Heart right ventricle (tissue), 16 donors: ENCODE measurements at regions of chr16 and their contacts with region 1.

Region 1: GRCh38 chr16:1474796-1475551 is at the start of gene CLCN7:
- DNase-seq: peak; percentile 90 to 93
- ATAC-seq: peak; percentile 94 to 98 (median 98)
- H3K4me3 ChIP-seq: peak within 1 kb of the TSS; percentile 61 to 99 (median 90)
- H3K27ac ChIP-seq: peak within 1 kb of the TSS; percentile 42 to 99 (median 94)
- H3K4me1 ChIP-seq: peaks cover 5 to 51% (median 24%) of the 10 kb centered on the region in 9 donors
- H3K27me3 ChIP-seq: no peaks in the 10 kb centered on the region
- CTCF ChIP-seq: no peak
- total RNA-seq, gene CLCN7: 29.9 to 60.1 (median 35.1) TPM

Region 2: DNA sequence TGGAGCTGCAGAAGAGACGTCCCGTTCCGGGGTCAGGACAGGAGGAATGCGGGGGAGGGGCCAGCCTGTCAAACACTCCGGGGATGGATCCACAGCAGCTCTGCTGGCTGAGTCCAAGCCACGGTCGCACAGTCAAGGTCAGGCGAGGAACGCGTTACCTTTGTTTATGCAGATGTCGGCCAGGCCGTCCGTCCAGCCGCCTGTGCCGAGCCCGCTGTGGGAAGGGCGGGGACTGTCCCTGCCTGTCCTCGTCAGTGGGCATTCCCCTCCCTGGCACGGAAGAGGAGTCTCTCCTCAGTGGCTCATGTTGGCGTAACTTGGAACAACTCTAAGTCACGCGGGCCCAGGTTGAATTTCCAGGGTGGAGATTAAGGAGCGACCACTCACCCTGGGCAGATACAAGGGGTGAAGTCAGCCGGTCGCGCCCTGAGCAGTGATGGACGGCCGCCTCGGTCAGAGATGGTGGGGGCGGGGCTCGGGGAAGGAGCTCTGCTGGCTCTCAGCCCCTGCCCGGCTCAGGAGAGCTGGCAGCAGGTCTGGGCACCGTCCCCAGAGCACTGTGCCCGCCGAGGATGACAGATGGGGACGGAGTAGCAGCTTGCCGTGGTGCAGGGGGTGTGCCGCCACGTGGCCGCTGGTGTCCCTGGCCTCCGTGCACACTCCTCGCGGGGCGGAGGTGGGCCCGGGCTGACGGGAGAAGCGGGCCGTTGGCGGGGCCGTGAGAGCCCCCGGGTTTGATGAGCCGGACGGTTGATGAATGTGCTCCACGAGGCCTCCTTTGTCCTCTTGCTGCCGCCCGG is 314.8 kb before region 1 on chr16:
- intact Hi-C with region 1: no loop called
- DNase-seq: peak; percentile 47 to 77
- ATAC-seq: peak; percentile 30 to 90 (median 78)
- H3K4me3 ChIP-seq: peak overlapping the region in 7 of 10 donors; percentile 13 to 26 (median 18)
- H3K27ac ChIP-seq: peak overlapping the region in 8 of 10 donors; percentile 25 to 82 (median 50)
- H3K4me1 ChIP-seq: peaks cover 0 to 29% (median 17%) of the 10 kb centered on the region in 9 donors
- H3K27me3 ChIP-seq: peaks cover 0 to 68% (median 46%) of the 10 kb centered on the region in 7 donors
- CTCF ChIP-seq: no peak

Region 3: GRCh38 chr16:1413684-1414531 is 61.1 kb before region 1 on chr16:
- intact Hi-C with region 1: loop called in 1 of 10 experiments (anchors 10 kb)
- DNase-seq: peak in 1 of 2 donors; percentile 69
- ATAC-seq: peak; percentile 16 to 54 (median 33)
- H3K4me3 ChIP-seq: peak overlapping the region; percentile 51 to 99 (median 92)
- H3K27ac ChIP-seq: peak overlapping the region; percentile 75 to 93 (median 86)
- H3K4me1 ChIP-seq: peaks cover 0 to 38% (median 13%) of the 10 kb centered on the region in 9 donors
- H3K27me3 ChIP-seq: no peaks in the 10 kb centered on the region
- CTCF ChIP-seq: peak; percentile 38 to 79 (median 63)

Region 4: DNA sequence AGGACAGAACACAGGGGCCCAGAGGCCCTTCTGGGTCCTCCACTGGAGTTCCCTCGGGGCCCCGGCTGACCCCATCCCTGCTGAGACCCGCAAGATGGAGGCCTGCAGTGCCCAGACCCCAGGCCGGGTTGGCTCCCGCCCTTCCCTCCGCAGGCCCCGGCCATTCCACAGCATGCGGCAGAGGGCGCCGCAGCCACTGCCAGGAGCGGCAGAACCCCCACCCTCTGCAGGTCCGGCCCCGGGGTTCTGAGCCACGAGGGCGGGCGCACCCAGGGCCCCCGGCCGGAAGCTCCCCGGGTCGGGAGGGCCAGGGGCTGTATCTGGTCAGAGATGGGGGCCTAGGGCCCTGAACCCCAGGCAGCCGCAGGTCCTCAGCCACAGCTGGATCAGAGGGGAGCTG is 46.5 kb before region 1 on chr16:
- intact Hi-C with region 1: loop called in 2 of 10 experiments (anchors 5 to 10 kb)
- DNase-seq: peak in 1 of 2 donors; percentile 56
- ATAC-seq: peak; percentile 29 to 66 (median 56)
- H3K4me3 ChIP-seq: peak overlapping the region in 7 of 10 donors; percentile 5 to 49 (median 22)
- H3K27ac ChIP-seq: peak overlapping the region in 2 of 10 donors; percentile 50 to 56
- H3K4me1 ChIP-seq: peaks cover 0 to 16% (median 6%) of the 10 kb centered on the region in 9 donors
- H3K27me3 ChIP-seq: peaks cover 0 to 5% (median 0%) of the 10 kb centered on the region in 7 donors
- CTCF ChIP-seq: peak; percentile 15 to 69 (median 48)

Region 5: DNA sequence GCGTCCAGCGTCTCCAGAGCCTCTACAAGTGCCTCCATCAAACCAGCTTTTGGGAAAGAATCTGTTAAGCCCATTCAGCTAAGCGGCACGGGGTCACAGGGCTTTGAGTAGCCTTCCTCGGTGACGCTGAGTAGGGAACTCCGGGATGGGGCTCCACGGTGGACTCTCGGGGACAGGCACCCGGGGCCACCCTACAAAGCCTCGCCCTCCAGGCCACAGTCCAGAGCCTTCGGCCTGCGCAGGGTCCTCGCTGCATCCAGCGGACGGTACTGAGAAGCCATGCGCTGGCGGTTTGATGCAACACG is 134.9 kb after region 1 on chr16:
- intact Hi-C with region 1: no loop called
- DNase-seq: no peak
- ATAC-seq: peak in 2 of 8 donors; percentile 4 to 11
- H3K4me3 ChIP-seq: peak overlapping the region; percentile 48 to 94 (median 78)
- H3K27ac ChIP-seq: peak overlapping the region in 9 of 10 donors; percentile 72 to 91 (median 84)
- H3K4me1 ChIP-seq: peaks cover 5 to 38% (median 32%) of the 10 kb centered on the region in 9 donors
- H3K27me3 ChIP-seq: no peaks in the 10 kb centered on the region
- CTCF ChIP-seq: no peak

Region 6: GRCh38 chr16:1620391-1620790 is 145.4 kb after region 1 on chr16:
- intact Hi-C with region 1: no loop called
- DNase-seq: no peak
- ATAC-seq: no peak
- H3K4me3 ChIP-seq: no peak overlapping the region
- H3K27ac ChIP-seq: no peak overlapping the region
- H3K4me1 ChIP-seq: peaks cover under 1 to 27% (median 15%) of the 10 kb centered on the region in 9 donors
- H3K27me3 ChIP-seq: no peaks in the 10 kb centered on the region
- CTCF ChIP-seq: no peak

Region 7: DNA sequence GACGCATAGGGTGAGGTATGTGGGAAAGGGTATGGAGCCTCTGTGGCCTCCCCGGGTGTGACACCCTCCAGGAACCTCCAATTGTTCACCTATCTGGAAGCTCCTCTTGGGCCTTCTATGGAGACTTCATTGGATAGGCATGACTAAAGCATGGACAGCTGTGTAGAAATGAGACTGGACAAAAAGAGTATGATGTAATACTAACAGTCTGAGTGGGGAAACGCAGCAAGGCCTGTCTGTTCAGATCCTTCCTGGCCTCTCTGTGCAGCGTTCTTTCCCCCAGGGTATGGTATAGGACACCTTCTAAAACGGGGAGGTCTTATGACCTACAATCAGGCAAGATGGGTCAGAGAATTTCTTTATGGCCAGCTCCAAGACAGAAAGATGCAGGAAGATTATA is 923.5 kb after region 1 on chr16:
- intact Hi-C with region 1: no loop called
- DNase-seq: no peak
- ATAC-seq: no peak
- H3K4me3 ChIP-seq: no peak overlapping the region
- H3K27ac ChIP-seq: no peak overlapping the region
- H3K4me1 ChIP-seq: no peaks in the 10 kb centered on the region
- H3K27me3 ChIP-seq: no peaks in the 10 kb centered on the region
- CTCF ChIP-seq: no peak